Tibial artery (tissue), 4 donors: ENCODE measurements at regions of chr15 and their contacts with region 1.

Region 1: DNA sequence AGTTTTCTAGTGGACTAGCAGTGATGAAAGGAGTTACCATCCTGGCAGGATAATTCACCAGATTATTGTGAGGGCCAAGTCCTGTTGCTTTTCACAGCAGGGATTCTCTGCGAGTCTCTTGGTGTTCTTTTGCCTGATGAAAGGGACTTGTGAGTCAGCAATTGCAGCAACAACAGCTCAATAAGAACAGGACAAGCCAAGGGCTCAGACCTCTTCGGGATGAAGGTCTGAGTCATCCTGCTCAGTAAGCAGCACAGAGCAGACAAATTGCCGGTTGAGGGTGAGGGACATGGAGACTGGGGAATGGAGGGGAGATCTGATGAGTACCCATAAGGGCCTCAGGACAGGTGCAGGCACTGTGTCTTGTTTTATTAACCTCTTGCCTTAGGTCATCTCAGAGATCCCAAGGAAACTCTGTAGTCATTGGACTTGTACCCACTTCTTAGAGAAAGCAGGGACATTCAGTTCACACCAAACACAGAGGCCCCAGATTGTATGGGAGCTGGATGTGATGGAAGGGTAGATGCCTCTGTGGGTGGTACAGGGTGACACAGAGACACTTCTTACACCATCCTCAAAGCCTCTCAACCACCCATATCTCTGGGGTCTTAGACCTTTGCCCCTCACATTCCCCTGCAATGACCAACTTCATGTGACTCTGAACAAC is 173.8 kb upstream of the TLE3 start:
- DNase-seq: peak; percentile 82 to 85
- H3K4me3 ChIP-seq: no peak overlapping the region
- H3K27ac ChIP-seq: peak overlapping the region; percentile 78 to 88
- H3K4me1 ChIP-seq: peaks cover 0 to 43% (median 41%) of the 10 kb centered on the region in 4 donors
- H3K27me3 ChIP-seq: no peaks in the 10 kb centered on the region
- CTCF ChIP-seq: no peak

Region 2: GRCh38 chr15:70327856-70328678 is 56.5 kb after region 1 on chr15:
- intact Hi-C with region 1: loop called (anchors 5 kb)
- DNase-seq: peak; percentile 75 to 84
- H3K4me3 ChIP-seq: no peak overlapping the region
- H3K27ac ChIP-seq: peak overlapping the region; percentile 31 to 47
- H3K4me1 ChIP-seq: peaks cover 0 to 43% (median 29%) of the 10 kb centered on the region in 4 donors
- H3K27me3 ChIP-seq: no peaks in the 10 kb centered on the region
- CTCF ChIP-seq: no peak